ENCODE measurements at regions of chr1 and their contacts with region 1.

Region 1: DNA sequence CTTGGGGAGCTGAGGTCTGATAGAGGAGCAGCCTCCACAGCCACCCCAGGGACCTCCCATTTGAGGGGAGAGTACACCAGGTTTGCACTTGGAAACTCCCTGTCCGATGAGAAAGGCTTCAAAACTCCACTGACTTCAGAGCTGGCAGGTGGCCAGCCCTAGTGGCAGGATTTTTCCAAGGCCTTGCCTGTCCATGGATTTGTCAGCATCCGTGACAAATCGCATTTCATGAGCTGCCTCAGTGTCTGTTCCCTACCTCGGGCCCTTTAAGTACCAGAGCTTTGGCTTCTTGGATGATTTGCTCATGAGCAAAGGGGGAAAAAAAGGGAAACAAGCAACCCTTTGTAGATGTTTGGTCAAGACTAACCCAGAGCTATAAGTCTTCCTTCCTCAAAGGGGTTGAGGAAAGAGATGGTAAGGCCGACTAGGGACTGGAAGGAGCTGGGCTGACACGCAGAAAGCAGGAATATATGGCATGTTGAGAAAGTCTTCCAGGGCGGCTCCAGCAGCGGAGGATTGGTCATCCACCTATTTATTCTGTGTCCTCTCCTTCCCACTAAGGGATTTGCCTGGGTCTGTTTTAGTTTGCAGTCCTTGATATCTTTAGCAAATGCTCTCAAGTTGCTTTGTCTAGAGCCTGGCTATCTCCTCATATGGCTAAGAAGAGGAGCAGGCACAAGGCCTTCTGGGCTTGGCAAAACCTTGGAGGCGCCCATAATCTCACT is 2.7 kb upstream of the HSPG2 start:
- DNase-seq: peak; percentile 81 to 90 (median 87)
- H3K4me3 ChIP-seq: no peak overlapping the region
- H3K27ac ChIP-seq: peak overlapping the region; percentile 17 to 26
- H3K4me1 ChIP-seq: peaks cover 10% of the 10 kb centered on the region
- H3K27me3 ChIP-seq: no peaks in the 10 kb centered on the region
- CTCF ChIP-seq: peak; percentile 43 to 67 (median 54)
- EP300 ChIP-seq: no peak
- POLR2A ChIP-seq: no peak

Region 2: GRCh38 chr1:21896652-21897532 is 42.9 kb before region 1 on chr1:
- intact Hi-C with region 1: loop called in 1 of 4 experiments (anchors 10 kb)
- DNase-seq: peak in 4 of 5 donors; percentile 57 to 75 (median 68)
- H3K4me3 ChIP-seq: no peak overlapping the region
- H3K27ac ChIP-seq: peak overlapping the region in 1 of 2 donors; percentile 70
- H3K4me1 ChIP-seq: peaks cover 22% of the 10 kb centered on the region
- H3K27me3 ChIP-seq: no peaks in the 10 kb centered on the region
- CTCF ChIP-seq: no peak
- EP300 ChIP-seq: no peak
- POLR2A ChIP-seq: no peak

Region 3: GRCh38 chr1:21926814-21927532 is 12.8 kb before region 1 on chr1:
- intact Hi-C with region 1: no loop called
- DNase-seq: peak; percentile 73 to 80 (median 75)
- H3K4me3 ChIP-seq: no peak overlapping the region
- H3K27ac ChIP-seq: peak overlapping the region; percentile 60 to 66
- H3K4me1 ChIP-seq: peaks cover 28% of the 10 kb centered on the region
- H3K27me3 ChIP-seq: no peaks in the 10 kb centered on the region
- CTCF ChIP-seq: no peak
- EP300 ChIP-seq: peak; percentile 15
- POLR2A ChIP-seq: no peak

Measured in ovary (tissue), 10 donors.